ENCODE measurements at regions of chr5 and their contacts with region 1.

Region 1: GRCh38 chr5:179265514-179266290 is 79.6 kb downstream of the ADAMTS2 start:
- DNase-seq: peak; percentile 70
- H3K4me3 ChIP-seq: no peak overlapping the region
- H3K27ac ChIP-seq: peak overlapping the region in 1 of 2 experiments; percentile 96; a peak in 2 of 4 replicates
- H3K4me1 ChIP-seq: peaks cover 0 to 95% of the 10 kb centered on the region in 2 experiments; a peak in 2 of 4 replicates
- H3K27me3 ChIP-seq: no peaks in the 10 kb centered on the region
- CTCF ChIP-seq: no peak
- EP300 ChIP-seq: no peak
- RAD21 ChIP-seq: no peak

Region 2: DNA sequence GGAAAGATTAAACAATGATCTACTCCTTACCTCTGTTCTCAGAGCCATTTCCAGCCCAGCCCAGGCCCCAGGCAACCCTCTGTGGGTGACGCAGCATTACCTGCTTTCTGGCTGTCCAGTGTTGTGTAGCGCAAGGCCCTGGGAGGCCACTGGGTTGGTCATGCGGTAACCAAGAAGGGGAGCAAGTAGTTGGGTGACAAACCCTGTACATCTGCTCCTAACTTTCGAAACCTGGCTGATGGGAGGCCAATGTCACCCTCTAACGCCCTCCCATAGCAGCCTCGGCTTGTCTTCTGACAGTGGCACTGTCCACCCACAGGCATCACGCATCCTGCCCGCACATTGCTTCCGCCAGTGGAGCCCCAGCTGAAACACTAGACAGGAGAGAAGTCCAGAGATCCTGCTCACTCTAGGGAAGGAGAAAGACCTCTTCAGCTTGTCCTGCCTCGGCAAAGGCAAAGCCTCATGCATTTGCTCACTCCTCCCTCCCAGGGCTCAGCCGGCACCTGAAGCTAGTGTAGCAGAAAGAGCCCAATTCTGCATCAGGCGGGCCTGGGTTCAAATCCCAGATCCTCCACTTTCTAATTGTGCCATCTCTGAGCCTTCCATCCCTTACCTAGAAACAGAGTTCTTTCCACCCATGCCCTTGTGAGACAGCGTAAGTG is 15.0 kb before region 1 on chr5:
- CTCF ChIA-PET with region 1: interaction called, 15 read pairs
- POLR2A ChIA-PET with region 1: no interaction called
- DNase-seq: no peak
- H3K4me3 ChIP-seq: no peak overlapping the region; a peak in 1 of 4 replicates
- H3K27ac ChIP-seq: no peak overlapping the region
- H3K4me1 ChIP-seq: no peaks in the 10 kb centered on the region; a peak in 1 of 4 replicates
- H3K27me3 ChIP-seq: no peaks in the 10 kb centered on the region
- CTCF ChIP-seq: no peak
- EP300 ChIP-seq: no peak
- RAD21 ChIP-seq: no peak

Region 3: GRCh38 chr5:179294891-179295772 is 29.4 kb after region 1 on chr5:
- CTCF ChIA-PET with region 1: no interaction called
- POLR2A ChIA-PET with region 1: no interaction called
- DNase-seq: peak; percentile 80
- H3K4me3 ChIP-seq: no peak overlapping the region
- H3K27ac ChIP-seq: peak overlapping the region in 1 of 2 experiments; percentile 98; a peak in 2 of 4 replicates
- H3K4me1 ChIP-seq: peaks cover 0 to 75% of the 10 kb centered on the region in 2 experiments; a peak in 2 of 4 replicates
- H3K27me3 ChIP-seq: no peaks in the 10 kb centered on the region
- CTCF ChIP-seq: no peak
- EP300 ChIP-seq: peak in 1 of 2 experiments; percentile 58; a peak in 2 of 4 replicates
- RAD21 ChIP-seq: no peak

Region 4: DNA sequence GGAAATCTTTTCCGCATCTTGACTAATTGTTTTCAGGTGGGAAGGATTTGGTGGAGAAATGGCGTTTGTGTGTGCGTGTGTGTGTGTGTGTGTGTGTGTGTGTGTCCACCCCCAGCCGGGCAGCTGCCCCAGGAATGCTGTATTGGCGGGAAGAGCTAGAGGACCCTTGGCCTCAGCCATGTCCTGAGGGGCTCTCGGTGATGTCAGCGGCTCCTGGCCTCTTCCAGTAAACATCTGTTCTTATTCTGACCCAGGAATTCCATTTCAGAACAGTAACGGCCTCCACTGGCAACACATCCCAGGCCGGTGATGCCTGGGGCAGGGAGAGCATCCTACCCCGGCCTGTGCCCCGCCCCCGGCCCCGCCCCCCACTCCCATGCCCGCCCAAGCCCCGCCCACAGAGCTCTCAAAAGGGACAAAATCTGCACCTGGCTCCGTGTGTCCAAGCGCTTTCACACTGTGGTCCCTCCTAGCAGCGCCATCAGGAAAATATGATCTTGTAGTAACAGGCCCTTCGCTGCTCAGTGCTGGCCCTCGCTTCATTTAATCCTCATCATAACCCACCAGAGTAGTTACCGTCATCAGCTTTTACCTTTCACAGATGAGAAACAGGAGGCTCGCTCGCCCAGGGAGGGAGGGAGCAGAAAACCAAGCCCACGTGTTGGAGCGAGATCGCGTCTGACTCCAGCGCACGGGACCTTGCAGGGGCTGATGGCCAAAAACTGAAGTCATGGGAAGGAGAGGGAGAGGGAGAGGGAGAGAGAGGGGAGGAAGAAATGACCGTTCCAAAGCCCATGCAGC is 60.6 kb after region 1 on chr5:
- CTCF ChIA-PET with region 1: interaction called, 15 read pairs
- POLR2A ChIA-PET with region 1: interaction called, 3 read pairs
- DNase-seq: peak; percentile 92
- H3K4me3 ChIP-seq: no peak overlapping the region
- H3K27ac ChIP-seq: peak overlapping the region in 1 of 2 experiments; percentile 96; a peak in 2 of 4 replicates
- H3K4me1 ChIP-seq: peaks cover 0 to 75% of the 10 kb centered on the region in 2 experiments; a peak in 2 of 4 replicates
- H3K27me3 ChIP-seq: no peaks in the 10 kb centered on the region
- CTCF ChIP-seq: no peak
- EP300 ChIP-seq: no peak
- RAD21 ChIP-seq: no peak

Region 5: GRCh38 chr5:179495906-179496455 is 230.3 kb after region 1 on chr5:
- CTCF ChIA-PET with region 1: interaction called, 35 read pairs
- POLR2A ChIA-PET with region 1: no interaction called
- DNase-seq: peak; percentile 48
- H3K4me3 ChIP-seq: no peak overlapping the region
- H3K27ac ChIP-seq: no peak overlapping the region
- H3K4me1 ChIP-seq: peaks cover 0 to 4% of the 10 kb centered on the region in 2 experiments; a peak in 1 of 4 replicates
- H3K27me3 ChIP-seq: no peaks in the 10 kb centered on the region
- CTCF ChIP-seq: no peak
- EP300 ChIP-seq: no peak
- RAD21 ChIP-seq: peak; percentile 48

Measured in SK-N-SH (cell line).